IMR-90 (cell line): ENCODE measurements at regions of chr11 and their contacts with region 1.

Region 1: GRCh38 chr11:19553683-19554333 is 158.8 kb upstream of the NAV2 start:
- DNase-seq: peak; percentile 62
- ATAC-seq: peak; percentile 79
- H3K4me3 ChIP-seq: no peak overlapping the region
- H3K27ac ChIP-seq: no peak overlapping the region
- H3K4me1 ChIP-seq: no peaks in the 10 kb centered on the region
- H3K27me3 ChIP-seq: peaks cover 32% of the 10 kb centered on the region
- CTCF ChIP-seq: peak; percentile 94
- POLR2A ChIP-seq: peak; percentile 40; the same call in 1 of the 2 replicates
- RAD21 ChIP-seq: peak; percentile 97

Region 2: DNA sequence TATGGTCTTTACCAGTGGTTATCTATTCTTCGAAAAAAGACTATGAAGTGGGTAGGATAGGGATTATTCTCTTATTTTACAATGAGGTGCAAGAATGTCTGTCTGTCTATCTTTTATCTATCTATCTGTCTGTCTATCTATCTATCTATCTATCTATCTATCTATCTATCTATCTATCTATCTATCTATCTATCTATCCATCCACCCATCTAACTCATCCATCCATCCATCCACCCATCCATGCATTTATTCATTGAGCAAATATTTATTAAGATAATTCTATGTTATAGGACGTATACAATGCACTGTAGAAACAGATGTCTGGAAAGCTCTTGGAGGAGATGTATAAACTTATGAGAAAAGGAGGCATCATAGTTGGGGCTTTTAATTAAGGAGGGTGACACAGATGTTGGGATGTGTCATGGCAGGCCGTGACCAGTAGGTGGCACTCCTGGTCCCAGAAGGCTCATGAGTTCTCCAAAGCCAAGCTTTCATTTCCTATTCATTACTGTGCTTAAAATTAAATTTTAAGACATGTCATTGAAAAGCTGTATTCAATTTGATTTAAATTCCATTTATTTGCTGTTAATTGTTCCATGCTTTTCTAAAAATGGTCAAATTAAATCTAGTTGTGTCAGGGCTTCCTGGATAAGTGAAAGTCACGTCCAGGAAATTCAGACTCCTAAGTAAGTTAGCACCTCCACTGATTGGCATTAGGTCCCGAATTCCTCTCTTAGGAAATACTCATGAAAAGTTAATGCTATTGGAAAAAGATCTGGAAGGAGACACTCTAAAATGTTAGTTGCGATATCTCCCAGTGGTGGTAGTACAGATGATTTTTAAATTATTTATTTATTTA is 294.1 kb before region 1 on chr11:
- CTCF ChIA-PET with region 1: interaction called, 7 read pairs
- POLR2A ChIA-PET with region 1: no interaction called
- dilution Hi-C with region 1: no loop called
- in situ Hi-C with region 1: no loop called
- intact Hi-C with region 1: loop called (anchors 1 kb)
- DNase-seq: peak; percentile 54
- ATAC-seq: peak; percentile 99
- H3K4me3 ChIP-seq: no peak overlapping the region
- H3K27ac ChIP-seq: no peak overlapping the region
- H3K4me1 ChIP-seq: no peaks in the 10 kb centered on the region
- H3K27me3 ChIP-seq: peaks cover 22% of the 10 kb centered on the region
- CTCF ChIP-seq: peak; percentile 90
- POLR2A ChIP-seq: no peak
- RAD21 ChIP-seq: peak; percentile 75

Region 3: DNA sequence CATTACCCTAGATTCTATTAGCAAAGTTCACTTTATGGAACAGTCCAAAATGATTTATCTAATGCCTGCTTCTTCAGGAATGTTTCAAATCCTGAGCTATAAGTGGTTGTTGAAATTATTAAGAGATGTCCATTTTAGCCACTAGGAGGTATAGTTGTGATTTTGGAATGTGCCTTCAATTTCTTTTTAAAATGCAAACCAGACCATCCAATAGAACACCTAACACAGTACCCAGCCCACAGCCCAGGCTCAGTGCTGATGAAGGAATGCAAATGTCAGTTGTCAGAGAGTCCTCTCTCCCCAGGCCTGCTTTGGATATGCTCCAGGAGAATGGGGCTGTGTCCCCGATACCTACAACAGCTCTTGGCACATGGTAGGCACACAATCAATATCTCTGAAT is 227.3 kb before region 1 on chr11:
- CTCF ChIA-PET with region 1: interaction called, 8 read pairs
- POLR2A ChIA-PET with region 1: no interaction called
- dilution Hi-C with region 1: no loop called
- in situ Hi-C with region 1: no loop called
- intact Hi-C with region 1: loop called (anchors 1 kb)
- DNase-seq: peak; percentile 29
- ATAC-seq: peak; percentile 75
- H3K4me3 ChIP-seq: no peak overlapping the region
- H3K27ac ChIP-seq: no peak overlapping the region
- H3K4me1 ChIP-seq: no peaks in the 10 kb centered on the region; the same call in 1 of the 2 replicates
- H3K27me3 ChIP-seq: peaks cover 47% of the 10 kb centered on the region
- CTCF ChIP-seq: peak; percentile 52
- POLR2A ChIP-seq: no peak
- RAD21 ChIP-seq: peak; percentile 58

Region 4: GRCh38 chr11:19605520-19606371 is 51.9 kb after region 1 on chr11:
- CTCF ChIA-PET with region 1: no interaction called
- POLR2A ChIA-PET with region 1: no interaction called
- dilution Hi-C with region 1: no loop called
- in situ Hi-C with region 1: no loop called
- intact Hi-C with region 1: no loop called
- DNase-seq: peak; percentile 68
- ATAC-seq: peak; percentile 75
- H3K4me3 ChIP-seq: no peak overlapping the region
- H3K27ac ChIP-seq: no peak overlapping the region
- H3K4me1 ChIP-seq: peaks cover 8% of the 10 kb centered on the region
- H3K27me3 ChIP-seq: peaks cover 7% of the 10 kb centered on the region
- CTCF ChIP-seq: no peak
- POLR2A ChIP-seq: no peak
- RAD21 ChIP-seq: no peak

Region 5: GRCh38 chr11:19742588-19743292 is 188.9 kb after region 1 on chr11:
- CTCF ChIA-PET with region 1: interaction called, 3 read pairs
- POLR2A ChIA-PET with region 1: no interaction called
- dilution Hi-C with region 1: no loop called
- in situ Hi-C with region 1: no loop called
- intact Hi-C with region 1: loop called (anchors 2 kb)
- DNase-seq: peak; percentile 79
- ATAC-seq: peak; percentile 92
- H3K4me3 ChIP-seq: no peak overlapping the region
- H3K27ac ChIP-seq: no peak overlapping the region
- H3K4me1 ChIP-seq: no peaks in the 10 kb centered on the region
- H3K27me3 ChIP-seq: no peaks in the 10 kb centered on the region
- CTCF ChIP-seq: peak; percentile 89
- POLR2A ChIP-seq: no peak
- RAD21 ChIP-seq: peak; percentile 97

Region 6: DNA sequence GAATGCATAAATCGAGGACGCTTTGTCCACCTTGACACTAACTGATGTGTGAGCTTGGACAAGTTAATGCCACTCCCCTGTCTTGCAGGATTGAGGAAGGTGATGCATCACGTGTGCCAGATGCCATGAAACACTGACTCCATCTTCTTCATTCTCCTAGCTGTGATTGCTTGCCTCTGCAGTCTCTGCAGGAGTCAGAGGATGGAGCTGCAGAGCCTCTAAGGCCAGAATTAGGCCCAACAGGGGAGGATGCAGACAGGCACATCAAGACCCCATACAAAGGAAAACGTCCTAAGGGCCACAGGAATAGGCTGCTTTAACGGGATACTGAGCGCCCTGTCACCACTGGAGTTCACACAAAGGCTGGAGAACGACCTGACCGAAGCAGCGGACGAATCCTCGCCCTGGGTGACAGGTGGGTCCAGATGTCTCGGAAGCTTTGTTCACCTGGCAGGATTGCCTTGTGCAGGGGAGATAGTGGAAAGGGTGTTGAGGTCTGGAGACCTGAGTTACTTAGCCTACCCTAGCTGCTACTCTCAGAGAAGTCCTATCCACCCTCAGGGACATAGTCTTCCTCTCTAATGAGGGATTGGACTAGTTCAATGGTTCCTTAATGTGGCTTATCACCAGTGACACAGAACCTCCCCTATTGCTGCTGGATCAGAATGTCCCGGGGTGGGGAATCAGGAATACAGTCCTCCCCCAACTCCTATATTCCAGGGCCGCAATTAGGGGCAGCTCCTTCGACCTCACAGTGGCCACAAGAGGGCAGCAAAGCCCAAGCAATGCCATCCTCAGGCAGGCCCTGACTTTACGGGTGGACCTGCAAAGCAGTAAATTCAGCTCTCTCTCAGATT is 574.1 kb after region 1 on chr11:
- CTCF ChIA-PET with region 1: no interaction called
- POLR2A ChIA-PET with region 1: no interaction called
- dilution Hi-C with region 1: no loop called
- in situ Hi-C with region 1: no loop called
- intact Hi-C with region 1: loop called (anchors 1 kb)
- DNase-seq: peak; percentile 69
- ATAC-seq: peak; percentile 82
- H3K4me3 ChIP-seq: no peak overlapping the region
- H3K27ac ChIP-seq: no peak overlapping the region
- H3K4me1 ChIP-seq: no peaks in the 10 kb centered on the region
- H3K27me3 ChIP-seq: no peaks in the 10 kb centered on the region; the same call in 1 of the 2 replicates
- CTCF ChIP-seq: peak; percentile 87
- POLR2A ChIP-seq: no peak
- RAD21 ChIP-seq: peak; percentile 88